Activated CD4-positive, alpha-beta T cell treated with anti-CD3 and anti-CD28 coated beads, Interleukin-2, amount 10 ng/mL, durations not matched to agents 7 days and 5 days (primary cell): ENCODE measurements at regions of chr2 and their contacts with region 1.

Region 1: DNA sequence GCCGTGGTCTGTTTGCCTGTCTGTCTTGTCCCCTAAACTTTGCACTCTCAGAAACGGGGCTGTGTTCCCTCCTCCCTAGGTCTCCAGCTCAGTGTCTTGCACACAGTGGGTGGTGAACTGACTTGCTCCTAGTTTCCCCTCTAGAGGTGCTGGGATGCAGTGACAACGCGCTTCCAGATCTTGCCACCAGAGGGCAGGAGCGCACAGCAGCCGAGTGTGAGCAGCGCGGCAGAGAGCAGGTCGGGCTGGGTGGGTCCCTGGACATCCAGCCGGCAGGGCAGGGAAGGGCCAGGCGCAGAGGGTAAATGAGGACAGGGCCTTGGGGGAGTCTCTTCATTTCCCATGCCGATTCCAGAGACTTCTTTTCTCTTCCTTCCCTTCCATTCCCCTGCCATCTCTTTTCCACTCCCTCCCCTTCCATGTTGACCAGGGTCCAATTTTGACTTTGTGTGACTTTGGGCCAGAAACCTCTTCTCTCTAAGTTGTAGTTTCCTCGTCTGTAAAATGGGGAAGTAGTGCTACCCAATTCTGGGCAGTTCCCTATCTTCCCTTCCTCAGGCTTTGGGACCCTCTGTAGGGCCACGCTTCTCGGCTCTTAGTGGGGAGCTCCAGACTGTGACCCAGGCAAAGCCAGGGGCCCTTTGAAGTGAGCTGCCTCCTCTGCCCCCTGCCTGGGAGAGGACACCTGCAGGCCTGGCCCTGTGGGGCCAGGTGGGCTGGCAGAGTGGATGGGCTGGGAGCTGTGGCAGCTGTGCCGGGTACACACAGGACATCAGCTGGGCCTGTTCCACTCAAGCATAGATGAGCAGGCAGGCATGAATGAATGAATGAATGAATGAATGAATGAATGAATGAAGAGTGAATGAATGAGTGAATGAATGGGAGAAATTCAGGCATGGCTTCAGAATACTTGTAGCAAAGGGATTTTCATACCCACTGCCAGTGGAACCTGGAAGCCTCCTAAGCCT is 43.3 kb upstream of the TAF1B start:
- DNase-seq: peak; percentile 86
- H3K4me3 Mint-ChIP-seq: peak overlapping the region; percentile 60
- H3K27ac Mint-ChIP-seq: peak overlapping the region; percentile 91
- H3K4me1 Mint-ChIP-seq: peaks cover 34% of the 10 kb centered on the region
- H3K27me3 Mint-ChIP-seq: peaks cover 5% of the 10 kb centered on the region

Region 2: GRCh38 chr2:9191041-9191481 is 608.9 kb before region 1 on chr2:
- CTCF ChIA-PET with region 1: no interaction called
- POLR2A ChIA-PET with region 1: no interaction called
- DNase-seq: no peak
- H3K4me3 Mint-ChIP-seq: no peak overlapping the region
- H3K27ac Mint-ChIP-seq: no peak overlapping the region
- H3K4me1 Mint-ChIP-seq: no peaks in the 10 kb centered on the region
- H3K27me3 Mint-ChIP-seq: peaks cover 10% of the 10 kb centered on the region

Region 3: GRCh38 chr2:9318461-9319337 is 481.2 kb before region 1 on chr2:
- CTCF ChIA-PET with region 1: no interaction called
- POLR2A ChIA-PET with region 1: no interaction called
- DNase-seq: no peak
- H3K4me3 Mint-ChIP-seq: no peak overlapping the region
- H3K27ac Mint-ChIP-seq: no peak overlapping the region
- H3K4me1 Mint-ChIP-seq: no peaks in the 10 kb centered on the region
- H3K27me3 Mint-ChIP-seq: peaks cover 9% of the 10 kb centered on the region

Region 4: GRCh38 chr2:9782197-9782719 is 17.7 kb before region 1 on chr2:
- CTCF ChIA-PET with region 1: interaction called, 29 read pairs
- POLR2A ChIA-PET with region 1: no interaction called
- DNase-seq: peak; percentile 86
- H3K4me3 Mint-ChIP-seq: peak overlapping the region; percentile 40
- H3K27ac Mint-ChIP-seq: peak overlapping the region; percentile 91
- H3K4me1 Mint-ChIP-seq: peaks cover 64% of the 10 kb centered on the region
- H3K27me3 Mint-ChIP-seq: peaks cover 2% of the 10 kb centered on the region

Region 5: DNA sequence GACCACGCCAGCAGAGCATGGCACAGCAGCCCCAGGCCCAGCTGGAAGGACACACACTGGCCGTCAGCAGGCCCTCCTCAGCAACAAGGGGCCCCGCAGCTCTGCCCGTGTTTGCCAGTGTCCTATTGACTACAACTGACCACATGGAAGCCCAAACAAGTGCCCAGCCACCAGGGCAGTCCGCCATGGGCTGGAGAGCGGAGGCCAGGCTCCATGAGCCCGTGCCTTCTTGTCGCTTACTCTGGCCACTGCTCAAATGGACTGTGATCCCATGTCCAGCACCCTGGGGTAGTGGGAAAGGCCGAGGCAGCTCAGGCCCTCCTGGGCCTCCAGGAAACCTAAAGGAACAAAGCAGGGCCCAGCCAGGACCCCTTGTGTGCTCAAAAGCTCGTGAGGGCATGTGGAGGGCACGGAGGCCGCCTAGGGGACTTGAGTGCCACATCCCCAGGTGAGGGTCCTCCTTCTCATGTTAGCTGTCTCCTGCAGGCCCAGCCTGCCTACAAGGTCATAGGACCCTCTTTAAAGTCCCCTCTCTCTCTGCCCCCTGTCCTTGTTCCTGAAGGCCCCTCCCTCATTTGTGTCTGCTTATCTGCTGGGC is 10.5 kb before region 1 on chr2:
- CTCF ChIA-PET with region 1: interaction called, 29 read pairs
- POLR2A ChIA-PET with region 1: no interaction called
- DNase-seq: no peak
- H3K4me3 Mint-ChIP-seq: no peak overlapping the region
- H3K27ac Mint-ChIP-seq: no peak overlapping the region
- H3K4me1 Mint-ChIP-seq: peaks cover 14% of the 10 kb centered on the region
- H3K27me3 Mint-ChIP-seq: peaks cover 2% of the 10 kb centered on the region

Region 6: DNA sequence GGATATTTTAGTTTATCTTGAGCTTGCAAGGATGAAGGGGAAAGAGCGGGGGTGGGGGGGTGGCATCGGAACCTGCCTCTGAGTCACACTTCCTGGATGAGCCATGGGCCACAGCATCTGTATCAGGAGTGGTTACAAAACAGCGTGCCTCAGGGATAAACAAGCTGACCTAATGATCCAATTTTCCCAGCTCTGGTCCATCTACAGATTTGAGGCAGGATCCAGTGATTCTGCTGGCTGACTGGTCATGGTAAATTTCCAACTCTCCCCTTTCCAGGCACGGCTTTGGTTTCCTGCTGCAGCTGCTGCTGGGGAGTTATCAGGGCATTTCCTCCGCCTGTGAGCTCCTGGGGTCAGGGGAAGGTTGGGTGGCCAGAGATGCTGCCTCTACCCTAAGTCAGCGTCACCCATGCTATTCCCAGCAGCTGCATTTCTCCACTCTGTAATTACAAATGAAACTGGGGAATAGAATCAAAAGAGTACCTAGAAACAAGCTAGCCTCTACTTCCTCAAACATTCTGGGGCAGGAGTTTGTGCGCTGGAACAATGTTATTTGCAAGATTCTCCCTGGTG is 498.1 kb after region 1 on chr2:
- CTCF ChIA-PET with region 1: no interaction called
- POLR2A ChIA-PET with region 1: no interaction called
- DNase-seq: peak; percentile 50
- H3K4me3 Mint-ChIP-seq: no peak overlapping the region
- H3K27ac Mint-ChIP-seq: peak overlapping the region; percentile 71
- H3K4me1 Mint-ChIP-seq: peaks cover 42% of the 10 kb centered on the region
- H3K27me3 Mint-ChIP-seq: peaks cover 5% of the 10 kb centered on the region